CD4-positive, alpha-beta T cell (primary cell): ENCODE measurements at regions of chr21 and their contacts with region 1.

Region 1: GRCh38 chr21:36589355-36589971 is 109.5 kb upstream of the SIM2 start:
- DNase-seq: peak in 3 of 14 experiments; percentile 5 to 16 (median 7)
- ATAC-seq: no peak
- H3K4me3 ChIP-seq: no peak overlapping the region
- H3K4me3 Mint-ChIP-seq: no peak overlapping the region
- H3K27ac ChIP-seq: no peak overlapping the region
- H3K27ac Mint-ChIP-seq: no peak overlapping the region
- H3K4me1 ChIP-seq: no peaks in the 10 kb centered on the region
- H3K4me1 Mint-ChIP-seq: peaks cover 6% of the 10 kb centered on the region
- H3K27me3 ChIP-seq: peaks cover 0 to 2% of the 10 kb centered on the region in 2 experiments
- H3K27me3 Mint-ChIP-seq: no peaks in the 10 kb centered on the region
- CTCF ChIP-seq: no peak

Region 2: GRCh38 chr21:36141513-36141925 is 447.9 kb before region 1 on chr21:
- CTCF ChIA-PET with region 1: no interaction called
- POLR2A ChIA-PET with region 1: no interaction called
- intact Hi-C with region 1: loop called in 1 of 2 experiments (anchors 10 kb)
- DNase-seq: peak; percentile 68 to 96 (median 82)
- ATAC-seq: peak; percentile 89
- H3K4me3 ChIP-seq: no peak overlapping the region
- H3K4me3 Mint-ChIP-seq: peak overlapping the region; percentile 0
- H3K27ac ChIP-seq: peak overlapping the region; percentile 19 to 38
- H3K27ac Mint-ChIP-seq: peak overlapping the region; percentile 66
- H3K4me1 ChIP-seq: peaks cover 33% of the 10 kb centered on the region
- H3K4me1 Mint-ChIP-seq: peaks cover 24% of the 10 kb centered on the region
- H3K27me3 ChIP-seq: no peaks in the 10 kb centered on the region
- H3K27me3 Mint-ChIP-seq: no peaks in the 10 kb centered on the region
- CTCF ChIP-seq: peak; percentile 84

Region 3: GRCh38 chr21:36692835-36693488 is 103.5 kb after region 1 on chr21:
- CTCF ChIA-PET with region 1: no interaction called
- POLR2A ChIA-PET with region 1: no interaction called
- intact Hi-C with region 1: loop called (anchors 5 to 10 kb)
- DNase-seq: no peak
- ATAC-seq: no peak
- H3K4me3 ChIP-seq: no peak overlapping the region
- H3K4me3 Mint-ChIP-seq: no peak overlapping the region
- H3K27ac ChIP-seq: no peak overlapping the region
- H3K27ac Mint-ChIP-seq: no peak overlapping the region
- H3K4me1 ChIP-seq: peaks cover 11% of the 10 kb centered on the region
- H3K4me1 Mint-ChIP-seq: peaks cover 25% of the 10 kb centered on the region
- H3K27me3 ChIP-seq: peaks cover 82 to 84% of the 10 kb centered on the region in 2 experiments
- H3K27me3 Mint-ChIP-seq: peaks cover 88% of the 10 kb centered on the region
- CTCF ChIP-seq: no peak

Region 4: DNA sequence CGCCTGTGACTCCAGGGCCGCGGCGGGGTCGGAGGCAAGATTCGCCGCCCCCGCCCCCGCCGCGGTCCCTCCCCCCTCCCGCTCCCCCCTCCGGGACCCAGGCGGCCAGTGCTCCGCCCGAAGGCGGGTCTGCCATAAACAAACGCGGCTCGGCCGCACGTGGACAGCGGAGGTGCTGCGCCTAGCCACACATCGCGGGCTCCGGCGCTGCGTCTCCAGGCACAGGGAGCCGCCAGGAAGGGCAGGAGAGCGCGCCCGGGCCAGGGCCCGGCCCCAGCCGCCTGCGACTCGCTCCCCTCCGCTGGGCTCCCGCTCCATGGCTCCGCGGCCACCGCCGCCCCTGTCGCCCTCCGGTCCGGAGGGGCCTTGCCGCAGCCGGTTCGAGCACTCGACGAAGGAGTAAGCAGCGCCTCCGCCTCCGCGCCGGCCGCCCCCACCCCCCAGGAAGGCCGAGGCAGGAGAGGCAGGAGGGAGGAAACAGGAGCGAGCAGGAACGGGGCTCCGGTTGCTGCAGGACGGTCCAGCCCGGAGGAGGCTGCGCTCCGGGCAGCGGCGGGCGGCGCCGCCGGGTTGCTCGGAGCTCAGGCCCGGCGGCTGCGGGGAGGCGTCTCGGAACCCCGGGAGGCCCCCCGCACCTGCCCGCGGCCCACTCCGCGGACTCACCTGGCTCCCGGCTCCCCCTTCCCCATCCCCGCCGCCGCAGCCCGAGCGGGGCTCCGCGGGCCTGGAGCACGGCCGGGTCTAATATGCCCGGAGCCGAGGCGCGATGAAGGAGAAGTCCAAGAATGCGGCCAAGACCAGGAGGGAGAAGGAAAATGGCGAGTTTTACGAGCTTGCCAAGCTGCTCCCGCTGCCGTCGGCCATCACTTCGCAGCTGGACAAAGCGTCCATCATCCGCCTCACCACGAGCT is 109.8 kb after region 1 on chr21 and contains the start of gene SIM2:
- CTCF ChIA-PET with region 1: no interaction called
- POLR2A ChIA-PET with region 1: no interaction called
- intact Hi-C with region 1: loop called (anchors 5 to 10 kb)
- DNase-seq: no peak
- ATAC-seq: no peak
- H3K4me3 ChIP-seq: no peak within 1 kb of the TSS
- H3K4me3 Mint-ChIP-seq: no peak within 1 kb of the TSS
- H3K27ac ChIP-seq: no peak within 1 kb of the TSS
- H3K27ac Mint-ChIP-seq: no peak within 1 kb of the TSS
- H3K4me1 ChIP-seq: peaks cover 27% of the 10 kb centered on the region
- H3K4me1 Mint-ChIP-seq: peaks cover 36% of the 10 kb centered on the region
- H3K27me3 ChIP-seq: peaks cover 81 to 92% of the 10 kb centered on the region in 2 experiments
- H3K27me3 Mint-ChIP-seq: peaks cover 75% of the 10 kb centered on the region
- CTCF ChIP-seq: no peak
- total RNA-seq, gene SIM2: not detected

Region 5: DNA sequence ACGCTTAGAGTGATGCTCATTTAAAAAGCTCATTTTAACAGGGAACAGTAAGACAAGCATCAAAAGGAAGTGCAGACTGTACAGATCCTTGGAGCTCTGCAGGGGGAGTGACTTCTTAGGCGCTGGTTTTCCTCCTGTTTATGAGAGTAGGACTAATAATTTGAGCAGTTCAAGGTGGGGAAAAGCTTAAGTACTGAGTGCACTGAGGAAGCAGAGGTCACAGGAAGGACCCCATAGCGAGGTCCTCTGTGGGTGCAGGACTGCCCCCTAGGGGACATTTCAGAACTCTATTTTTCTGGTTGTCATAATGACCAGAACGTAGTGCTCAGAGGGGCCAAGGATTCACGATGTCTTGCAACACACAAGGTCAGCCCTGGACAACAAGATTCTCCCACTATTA is 264.9 kb after region 1 on chr21:
- CTCF ChIA-PET with region 1: no interaction called
- POLR2A ChIA-PET with region 1: no interaction called
- intact Hi-C with region 1: loop called in 1 of 2 experiments (anchors 10 kb)
- DNase-seq: peak in 4 of 14 experiments; percentile 9 to 23 (median 16)
- ATAC-seq: no peak
- H3K4me3 ChIP-seq: no peak overlapping the region
- H3K4me3 Mint-ChIP-seq: no peak overlapping the region
- H3K27ac ChIP-seq: no peak overlapping the region
- H3K27ac Mint-ChIP-seq: no peak overlapping the region
- H3K4me1 ChIP-seq: no peaks in the 10 kb centered on the region
- H3K4me1 Mint-ChIP-seq: no peaks in the 10 kb centered on the region
- H3K27me3 ChIP-seq: no peaks in the 10 kb centered on the region
- H3K27me3 Mint-ChIP-seq: no peaks in the 10 kb centered on the region
- CTCF ChIP-seq: no peak